CD4-positive, alpha-beta memory T cell (primary cell): ENCODE measurements at regions of chr7 and their contacts with region 1.

Region 1: DNA sequence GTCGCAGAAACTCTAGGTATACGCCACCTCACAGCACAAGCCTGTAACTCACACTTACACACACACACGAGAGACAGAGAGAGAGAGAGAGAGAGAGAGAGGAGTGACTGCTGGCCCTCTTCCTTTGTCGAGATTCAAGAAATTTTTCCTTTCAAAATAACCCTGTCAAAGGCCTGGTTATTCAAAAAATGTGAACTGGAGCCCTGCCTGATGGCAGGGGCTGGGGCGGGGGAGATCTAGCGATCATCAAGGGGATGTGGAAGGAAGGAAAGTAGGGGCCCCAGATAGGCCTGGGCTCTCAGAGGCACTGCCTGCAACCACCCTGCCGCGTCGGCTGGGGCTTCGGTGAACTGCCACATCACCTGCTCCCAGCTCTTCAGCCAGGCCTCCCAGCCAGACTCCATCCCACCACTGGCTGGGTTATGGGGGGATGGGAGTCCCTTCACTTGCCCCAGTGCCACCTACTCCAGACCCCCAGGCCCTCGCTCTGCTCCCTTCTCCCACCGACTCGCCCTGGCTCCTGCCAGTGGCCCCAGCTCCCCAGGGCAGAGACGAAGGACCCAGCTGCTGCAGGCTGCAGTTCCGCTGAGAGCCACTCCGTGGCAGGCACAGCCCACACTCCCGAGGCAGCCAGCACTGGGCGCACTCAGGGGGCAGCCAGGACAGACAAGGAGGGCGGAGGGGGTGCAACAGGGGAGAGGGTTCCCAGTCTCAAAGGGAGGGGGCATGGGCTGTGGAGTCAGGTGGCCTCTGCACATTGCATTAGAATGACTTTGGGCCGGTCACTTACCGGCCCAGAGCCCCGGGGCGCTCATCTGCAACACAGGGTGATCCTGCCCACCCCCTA is 15.3 kb downstream of the KCNH2 start:
- DNase-seq: peak in 4 of 5 donors; percentile 58 to 63 (median 62)
- H3K4me3 ChIP-seq: no peak overlapping the region
- H3K4me3 Mint-ChIP-seq: no peak overlapping the region
- H3K27ac ChIP-seq: no peak overlapping the region
- H3K27ac Mint-ChIP-seq: no peak overlapping the region
- H3K4me1 ChIP-seq: peaks cover 21% of the 10 kb centered on the region
- H3K4me1 Mint-ChIP-seq: peaks cover 6 to 15% (median 9%) of the 10 kb centered on the region in 4 donors
- H3K27me3 ChIP-seq: no peaks in the 10 kb centered on the region
- H3K27me3 Mint-ChIP-seq: peaks cover 12 to 13% of the 10 kb centered on the region in 2 donors

Region 2: GRCh38 chr7:150988230-150989226 is 25.8 kb after region 1 on chr7:
- CTCF ChIA-PET with region 1: interaction called, 86 read pairs
- POLR2A ChIA-PET with region 1: interaction called, 4 read pairs
- intact Hi-C with region 1: loop called (anchors 1 kb)
- DNase-seq: peak; percentile 53 to 72 (median 70)
- H3K4me3 ChIP-seq: peak overlapping the region in 1 of 2 donors; percentile 47
- H3K4me3 Mint-ChIP-seq: peak overlapping the region; percentile 55 to 85 (median 75)
- H3K27ac ChIP-seq: no peak overlapping the region
- H3K27ac Mint-ChIP-seq: peak overlapping the region; percentile 23 to 95 (median 83)
- H3K4me1 ChIP-seq: peaks cover 35% of the 10 kb centered on the region
- H3K4me1 Mint-ChIP-seq: peaks cover 18 to 50% (median 31%) of the 10 kb centered on the region in 4 donors
- H3K27me3 ChIP-seq: no peaks in the 10 kb centered on the region
- H3K27me3 Mint-ChIP-seq: no peaks in the 10 kb centered on the region

Region 3: GRCh38 chr7:150994141-150994964 is 31.6 kb after region 1 on chr7:
- CTCF ChIA-PET with region 1: interaction called, 36 read pairs
- POLR2A ChIA-PET with region 1: no interaction called
- intact Hi-C with region 1: no loop called
- DNase-seq: peak in 1 of 5 donors; percentile 32
- H3K4me3 ChIP-seq: peak overlapping the region in 1 of 2 donors; percentile 36
- H3K4me3 Mint-ChIP-seq: peak overlapping the region; percentile 26 to 61 (median 46)
- H3K27ac ChIP-seq: peak overlapping the region; percentile 7
- H3K27ac Mint-ChIP-seq: peak overlapping the region in 6 of 7 donors; percentile 29 to 85 (median 69)
- H3K4me1 ChIP-seq: peaks cover 43% of the 10 kb centered on the region
- H3K4me1 Mint-ChIP-seq: peaks cover 17 to 52% (median 38%) of the 10 kb centered on the region in 4 donors
- H3K27me3 ChIP-seq: no peaks in the 10 kb centered on the region
- H3K27me3 Mint-ChIP-seq: no peaks in the 10 kb centered on the region

Region 4: GRCh38 chr7:151142686-151143040 is 179.9 kb after region 1 on chr7:
- CTCF ChIA-PET with region 1: no interaction called
- POLR2A ChIA-PET with region 1: no interaction called
- intact Hi-C with region 1: no loop called
- DNase-seq: no peak
- H3K4me3 ChIP-seq: no peak overlapping the region
- H3K4me3 Mint-ChIP-seq: no peak overlapping the region
- H3K27ac ChIP-seq: no peak overlapping the region
- H3K27ac Mint-ChIP-seq: no peak overlapping the region
- H3K4me1 ChIP-seq: no peaks in the 10 kb centered on the region
- H3K4me1 Mint-ChIP-seq: peaks cover 0 to 2% (median 0%) of the 10 kb centered on the region in 4 donors
- H3K27me3 ChIP-seq: no peaks in the 10 kb centered on the region
- H3K27me3 Mint-ChIP-seq: no peaks in the 10 kb centered on the region

Region 5: GRCh38 chr7:151152643-151153513 is 190.1 kb after region 1 on chr7:
- CTCF ChIA-PET with region 1: no interaction called
- POLR2A ChIA-PET with region 1: no interaction called
- intact Hi-C with region 1: no loop called
- DNase-seq: no peak
- H3K4me3 ChIP-seq: no peak overlapping the region
- H3K4me3 Mint-ChIP-seq: no peak overlapping the region
- H3K27ac ChIP-seq: no peak overlapping the region
- H3K27ac Mint-ChIP-seq: no peak overlapping the region
- H3K4me1 ChIP-seq: no peaks in the 10 kb centered on the region
- H3K4me1 Mint-ChIP-seq: no peaks in the 10 kb centered on the region
- H3K27me3 ChIP-seq: peaks cover 8% of the 10 kb centered on the region
- H3K27me3 Mint-ChIP-seq: peaks cover 11 to 22% of the 10 kb centered on the region in 2 donors